ENCODE measurements at regions of chr12 and their contacts with region 1.

Region 1: DNA sequence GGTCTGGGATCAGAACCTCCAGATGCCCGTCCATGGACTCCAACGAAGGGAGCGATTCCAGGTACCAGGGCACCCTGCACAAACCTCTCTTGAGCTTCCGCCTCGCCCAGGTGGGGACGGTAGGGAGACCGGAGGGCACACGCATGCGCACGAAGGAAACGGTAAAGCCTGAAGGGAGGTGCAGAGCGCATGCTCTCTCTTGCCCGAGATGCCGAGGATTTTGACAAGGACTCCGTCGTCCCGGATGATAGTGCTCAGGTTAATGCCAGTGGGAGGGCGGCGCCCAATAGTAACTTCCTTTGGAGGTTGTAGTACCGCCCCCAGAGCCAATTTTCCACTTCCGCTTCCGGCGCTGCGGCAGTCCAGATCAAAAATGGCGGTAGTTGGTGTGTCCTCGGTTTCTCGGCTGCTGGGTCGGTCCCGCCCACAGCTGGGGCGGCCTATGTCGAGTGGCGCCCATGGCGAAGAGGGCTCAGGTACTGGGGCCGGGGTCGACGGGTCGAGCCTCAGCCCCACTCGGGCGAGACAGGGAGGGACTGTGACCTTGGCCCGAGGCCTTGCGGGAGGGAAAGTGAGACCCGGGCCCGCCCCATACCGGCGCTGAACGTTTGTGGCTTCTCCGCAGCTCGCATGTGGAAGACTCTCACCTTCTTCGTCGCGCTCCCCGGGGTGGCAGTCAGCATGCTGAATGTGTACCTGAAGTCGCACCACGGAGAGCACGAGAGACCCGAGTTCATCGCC is at the start of gene COX6A1:
- DNase-seq: peak; percentile 94 to 99 (median 98)
- H3K4me3 ChIP-seq: peak within 1 kb of the TSS; percentile 52 to 70
- H3K4me3 Mint-ChIP-seq: peak within 1 kb of the TSS; percentile 92 to 99 (median 96)
- H3K27ac ChIP-seq: peak within 1 kb of the TSS; percentile 76
- H3K27ac Mint-ChIP-seq: peak within 1 kb of the TSS; percentile 86 to 99 (median 96)
- H3K4me1 ChIP-seq: peaks cover 26% of the 10 kb centered on the region
- H3K4me1 Mint-ChIP-seq: peaks cover 18 to 31% (median 27%) of the 10 kb centered on the region in 4 donors
- H3K27me3 ChIP-seq: no peaks in the 10 kb centered on the region
- H3K27me3 Mint-ChIP-seq: peaks cover under 1 to 3% of the 10 kb centered on the region in 2 donors
- total RNA-seq, gene COX6A1: 144 to 158 TPM

Region 2: GRCh38 chr12:120317224-120318105 is 120.5 kb before region 1 on chr12:
- CTCF ChIA-PET with region 1: no interaction called
- POLR2A ChIA-PET with region 1: interaction called, 4 read pairs
- intact Hi-C with region 1: loop called (anchors 5 kb)
- DNase-seq: peak; percentile 100
- H3K4me3 ChIP-seq: peak overlapping the region; percentile 42 to 65
- H3K4me3 Mint-ChIP-seq: peak overlapping the region; percentile 87 to 95 (median 92)
- H3K27ac ChIP-seq: peak overlapping the region; percentile 81
- H3K27ac Mint-ChIP-seq: peak overlapping the region; percentile 90 to 99 (median 98)
- H3K4me1 ChIP-seq: peaks cover 10% of the 10 kb centered on the region
- H3K4me1 Mint-ChIP-seq: peaks cover 11 to 16% (median 14%) of the 10 kb centered on the region in 4 donors
- H3K27me3 ChIP-seq: no peaks in the 10 kb centered on the region
- H3K27me3 Mint-ChIP-seq: no peaks in the 10 kb centered on the region

Region 3: GRCh38 chr12:120453977-120454376 is 16.1 kb after region 1 on chr12:
- CTCF ChIA-PET with region 1: interaction called, 17 read pairs
- POLR2A ChIA-PET with region 1: interaction called, 4 read pairs
- intact Hi-C with region 1: no loop called
- DNase-seq: peak; percentile 33 to 46 (median 37)
- H3K4me3 ChIP-seq: no peak overlapping the region
- H3K4me3 Mint-ChIP-seq: no peak overlapping the region
- H3K27ac ChIP-seq: no peak overlapping the region
- H3K27ac Mint-ChIP-seq: peak overlapping the region in 3 of 7 donors; percentile 5 to 65 (median 55)
- H3K4me1 ChIP-seq: peaks cover 13% of the 10 kb centered on the region
- H3K4me1 Mint-ChIP-seq: peaks cover 0 to 17% (median 8%) of the 10 kb centered on the region in 4 donors
- H3K27me3 ChIP-seq: no peaks in the 10 kb centered on the region
- H3K27me3 Mint-ChIP-seq: no peaks in the 10 kb centered on the region

Region 4: DNA sequence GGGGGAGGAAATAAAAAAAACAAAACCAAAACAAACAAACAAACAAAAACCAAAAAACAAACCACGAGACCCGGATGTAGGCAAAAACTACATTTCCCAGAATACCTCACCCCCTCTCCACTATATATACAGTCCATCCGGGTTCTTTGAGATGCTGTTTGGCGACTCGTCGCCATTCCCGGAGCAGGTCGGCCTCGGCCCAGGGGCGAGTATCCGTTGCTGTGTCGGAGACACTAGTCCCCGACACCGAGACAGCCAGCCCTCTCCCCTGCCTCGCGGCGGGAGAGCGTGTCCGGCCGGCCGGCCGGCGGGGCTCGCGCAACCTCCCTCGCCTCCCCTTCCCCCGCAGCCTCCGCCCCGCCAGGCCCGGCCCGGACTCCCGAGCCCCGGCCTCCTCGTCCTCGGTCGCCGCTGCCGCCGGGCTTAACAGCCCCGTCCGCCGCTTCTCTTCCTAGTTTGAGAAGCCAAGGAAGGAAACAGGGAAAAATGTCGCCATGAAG is 96.3 kb after region 1 on chr12 and contains the start of gene RNF10:
- CTCF ChIA-PET with region 1: interaction called, 7 read pairs
- POLR2A ChIA-PET with region 1: interaction called, 7 read pairs
- intact Hi-C with region 1: loop called (anchors 2 kb)
- DNase-seq: peak; percentile 85 to 87 (median 86)
- H3K4me3 ChIP-seq: peak within 1 kb of the TSS; percentile 62 to 88
- H3K4me3 Mint-ChIP-seq: peak within 1 kb of the TSS; percentile 92 to 97 (median 94)
- H3K27ac ChIP-seq: peak within 1 kb of the TSS; percentile 94
- H3K27ac Mint-ChIP-seq: peak within 1 kb of the TSS; percentile 95 to 98 (median 96)
- H3K4me1 ChIP-seq: peaks cover 59% of the 10 kb centered on the region
- H3K4me1 Mint-ChIP-seq: peaks cover 43 to 68% (median 49%) of the 10 kb centered on the region in 4 donors
- H3K27me3 ChIP-seq: no peaks in the 10 kb centered on the region
- H3K27me3 Mint-ChIP-seq: no peaks in the 10 kb centered on the region
- total RNA-seq, gene RNF10: 244 to 249 TPM

Region 5: DNA sequence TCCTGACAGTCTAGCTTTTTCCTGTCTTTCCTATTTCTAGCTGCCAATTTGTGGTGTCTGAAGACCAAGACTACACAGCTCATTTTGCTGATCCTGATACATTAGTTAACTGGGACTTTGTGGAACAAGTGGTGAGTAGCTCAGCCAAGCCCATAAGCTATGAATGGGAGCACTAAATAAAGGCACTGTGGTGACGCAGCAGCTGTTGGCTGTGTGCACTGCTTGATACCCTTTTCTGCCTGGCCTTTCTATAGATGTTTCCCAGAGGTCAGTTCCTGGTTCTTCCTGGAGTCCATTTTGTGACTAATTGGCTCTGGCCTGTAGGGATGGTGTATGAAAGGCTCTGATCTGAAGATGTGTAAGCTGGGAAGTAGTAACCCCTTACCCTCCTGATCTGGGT is 116.8 kb after region 1 on chr12:
- CTCF ChIA-PET with region 1: no interaction called
- POLR2A ChIA-PET with region 1: no interaction called
- intact Hi-C with region 1: no loop called
- DNase-seq: no peak
- H3K4me3 ChIP-seq: no peak overlapping the region
- H3K4me3 Mint-ChIP-seq: no peak overlapping the region
- H3K27ac ChIP-seq: no peak overlapping the region
- H3K27ac Mint-ChIP-seq: peak overlapping the region in 2 of 7 donors; percentile 8 to 62
- H3K4me1 ChIP-seq: peaks cover 11% of the 10 kb centered on the region
- H3K4me1 Mint-ChIP-seq: peaks cover 6 to 21% (median 14%) of the 10 kb centered on the region in 4 donors
- H3K27me3 ChIP-seq: no peaks in the 10 kb centered on the region
- H3K27me3 Mint-ChIP-seq: no peaks in the 10 kb centered on the region

Region 6: GRCh38 chr12:121085506-121086353 is 647.8 kb after region 1 on chr12:
- CTCF ChIA-PET with region 1: no interaction called
- POLR2A ChIA-PET with region 1: no interaction called
- intact Hi-C with region 1: no loop called
- DNase-seq: no peak
- H3K4me3 ChIP-seq: no peak overlapping the region
- H3K4me3 Mint-ChIP-seq: no peak overlapping the region
- H3K27ac ChIP-seq: no peak overlapping the region
- H3K27ac Mint-ChIP-seq: peak overlapping the region in 1 of 7 donors; percentile 36
- H3K4me1 ChIP-seq: peaks cover 6% of the 10 kb centered on the region
- H3K4me1 Mint-ChIP-seq: peaks cover 12 to 25% (median 17%) of the 10 kb centered on the region in 4 donors
- H3K27me3 ChIP-seq: no peaks in the 10 kb centered on the region
- H3K27me3 Mint-ChIP-seq: no peaks in the 10 kb centered on the region

Measured in CD4-positive, alpha-beta memory T cell (primary cell).